SK-N-SH (cell line): ENCODE measurements at regions of chr22 and their contacts with region 1.

Region 1: GRCh38 chr22:24758164-24758799 is 16.2 kb downstream of the PIWIL3 start:
- DNase-seq: peak; percentile 57
- H3K4me3 ChIP-seq: no peak overlapping the region; a peak in 1 of 4 replicates
- H3K27ac ChIP-seq: no peak overlapping the region
- H3K4me1 ChIP-seq: no peaks in the 10 kb centered on the region
- H3K27me3 ChIP-seq: peaks cover 24% of the 10 kb centered on the region; the same call in 1 of the 2 replicates
- CTCF ChIP-seq: peak; percentile 96
- EP300 ChIP-seq: no peak
- RAD21 ChIP-seq: peak; percentile 90

Region 2: DNA sequence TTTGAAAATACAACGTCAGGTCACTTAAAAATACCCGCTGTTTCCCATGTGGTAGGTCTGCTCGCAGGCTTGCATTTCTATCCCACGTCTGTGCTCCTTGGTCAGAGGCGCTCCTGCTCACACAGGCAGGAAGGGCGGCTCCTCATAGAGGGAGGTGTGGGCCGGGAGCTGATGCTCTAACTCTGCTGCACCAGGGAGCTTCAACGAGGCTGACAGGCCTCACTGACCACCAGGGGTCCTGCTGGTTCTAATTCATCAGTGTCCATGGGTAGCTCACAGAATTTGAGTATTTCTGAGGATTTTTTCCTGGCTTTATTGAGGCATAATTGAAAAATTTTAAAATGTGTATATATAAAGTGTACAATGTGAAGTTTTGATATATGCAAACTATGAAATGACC is 52.2 kb before region 1 on chr22:
- CTCF ChIA-PET with region 1: interaction called, 10 read pairs
- POLR2A ChIA-PET with region 1: no interaction called
- DNase-seq: peak; percentile 64
- H3K4me3 ChIP-seq: no peak overlapping the region
- H3K27ac ChIP-seq: no peak overlapping the region
- H3K4me1 ChIP-seq: peaks cover 0 to 3% of the 10 kb centered on the region in 2 experiments; a peak in 1 of 4 replicates
- H3K27me3 ChIP-seq: peaks cover 16% of the 10 kb centered on the region; the same call in 1 of the 2 replicates
- CTCF ChIP-seq: peak; percentile 36
- EP300 ChIP-seq: no peak
- RAD21 ChIP-seq: peak; percentile 42

Region 3: DNA sequence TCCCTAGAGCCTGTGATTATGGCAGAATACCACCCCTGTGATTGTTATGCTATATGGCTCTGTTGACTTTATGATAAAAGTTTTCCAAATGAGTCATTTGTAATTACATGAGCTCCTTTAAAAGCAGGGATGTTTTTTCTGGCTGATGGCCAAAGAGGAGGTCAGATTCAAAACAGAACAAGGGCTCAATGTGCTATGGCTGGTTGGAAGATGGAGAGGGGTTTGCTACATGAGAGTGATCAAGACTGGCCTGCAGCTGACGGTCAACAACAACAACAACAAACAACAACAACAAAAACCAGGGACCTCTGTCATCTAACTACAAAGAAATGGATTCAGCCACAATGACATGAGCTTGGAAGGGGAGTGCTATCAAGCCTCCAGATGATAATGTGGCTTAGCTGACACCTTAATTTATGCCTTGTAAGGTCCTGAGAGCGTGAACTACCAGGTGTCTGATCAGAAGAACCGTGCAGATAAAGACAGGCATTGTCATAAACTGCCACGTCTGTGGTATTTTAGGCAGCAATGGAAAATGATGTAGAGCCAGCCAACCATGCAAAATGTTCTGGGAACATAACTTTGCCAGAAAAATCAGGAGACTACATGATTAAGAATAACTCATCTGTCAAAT is 30.9 kb before region 1 on chr22:
- CTCF ChIA-PET with region 1: no interaction called
- POLR2A ChIA-PET with region 1: no interaction called
- DNase-seq: peak; percentile 66
- H3K4me3 ChIP-seq: no peak overlapping the region
- H3K27ac ChIP-seq: peak overlapping the region in 1 of 2 experiments; percentile 76; a peak in 2 of 4 replicates
- H3K4me1 ChIP-seq: peaks cover 0 to 17% of the 10 kb centered on the region in 2 experiments; a peak in 2 of 4 replicates
- H3K27me3 ChIP-seq: peaks cover 34% of the 10 kb centered on the region; the same call in 1 of the 2 replicates
- CTCF ChIP-seq: no peak
- EP300 ChIP-seq: peak in 1 of 2 experiments; percentile 26; a peak in 1 of 4 replicates
- RAD21 ChIP-seq: no peak